Activated CD8-positive, alpha-beta T cell treated with anti-CD3 and anti-CD28 coated beads for 36 hours (primary cell): ENCODE measurements at regions of chr6 and their contacts with region 1.

Region 1: GRCh38 chr6:144726129-144726522 is 441.0 kb downstream of the UTRN start:
- DNase-seq: peak; percentile 88
- ATAC-seq: peak; percentile 83
- H3K4me3 Mint-ChIP-seq: peak overlapping the region; percentile 9
- H3K27ac Mint-ChIP-seq: peak overlapping the region; percentile 61
- H3K4me1 Mint-ChIP-seq: peaks cover 65% of the 10 kb centered on the region
- H3K27me3 Mint-ChIP-seq: no peaks in the 10 kb centered on the region
- CTCF ChIP-seq: no peak

Region 2: GRCh38 chr6:144595266-144595665 is 130.9 kb before region 1 on chr6:
- CTCF ChIA-PET with region 1: no interaction called
- POLR2A ChIA-PET with region 1: no interaction called
- intact Hi-C with region 1: loop called (anchors 5 kb)
- DNase-seq: no peak
- ATAC-seq: no peak
- H3K4me3 Mint-ChIP-seq: no peak overlapping the region
- H3K27ac Mint-ChIP-seq: no peak overlapping the region
- H3K4me1 Mint-ChIP-seq: peaks cover 22% of the 10 kb centered on the region
- H3K27me3 Mint-ChIP-seq: no peaks in the 10 kb centered on the region
- CTCF ChIP-seq: no peak